Aorta (tissue), 5 donors: ENCODE measurements at regions of chrX and their contacts with region 1.

Region 1: GRCh38 chrX:154019633-154020528 is at the start of gene IRAK1:
- DNase-seq: peak; percentile 74 to 86
- ATAC-seq: peak; percentile 60
- H3K4me3 ChIP-seq: peak within 1 kb of the TSS; percentile 32 to 59
- H3K27ac ChIP-seq: peak within 1 kb of the TSS in 1 of 2 donors; percentile 41
- H3K4me1 ChIP-seq: no peaks in the 10 kb centered on the region
- H3K27me3 ChIP-seq: no peaks in the 10 kb centered on the region
- total RNA-seq, gene IRAK1: 62.3 to 78.3 TPM

Region 2: DNA sequence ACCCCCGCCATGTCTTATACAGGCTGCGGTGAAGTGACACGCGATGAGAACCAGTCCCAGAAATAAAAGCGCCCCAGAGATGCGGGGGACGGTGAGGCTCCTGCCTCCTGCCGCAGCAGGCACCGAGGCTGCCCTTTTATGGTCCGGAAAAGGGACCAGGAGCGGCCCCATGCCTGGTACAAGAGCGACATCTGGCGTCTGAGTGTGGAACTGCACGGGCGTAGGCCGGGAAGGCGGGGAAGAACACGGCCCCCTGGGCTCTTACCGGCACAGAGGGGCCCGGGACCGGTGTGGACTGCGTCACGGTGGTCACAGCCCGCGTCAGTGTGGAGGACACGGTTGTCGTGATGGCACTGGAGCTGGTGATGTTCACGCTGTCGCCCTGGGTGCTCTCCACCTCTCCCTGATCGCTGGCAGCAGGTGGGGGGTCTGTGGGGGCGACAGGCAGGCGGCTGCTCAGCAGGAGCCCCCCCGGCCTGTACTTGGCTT is 66.5 kb before region 1 on chrX:
- intact Hi-C with region 1: no loop called
- DNase-seq: peak; percentile 84 to 93
- ATAC-seq: peak; percentile 89
- H3K4me3 ChIP-seq: no peak overlapping the region
- H3K27ac ChIP-seq: peak overlapping the region in 1 of 2 donors; percentile 19
- H3K4me1 ChIP-seq: no peaks in the 10 kb centered on the region
- H3K27me3 ChIP-seq: no peaks in the 10 kb centered on the region

Region 3: GRCh38 chrX:154040307-154040756 is 20.5 kb after region 1 on chrX:
- intact Hi-C with region 1: no loop called
- DNase-seq: no peak
- ATAC-seq: no peak
- H3K4me3 ChIP-seq: no peak overlapping the region
- H3K27ac ChIP-seq: no peak overlapping the region
- H3K4me1 ChIP-seq: no peaks in the 10 kb centered on the region
- H3K27me3 ChIP-seq: no peaks in the 10 kb centered on the region

Region 4: GRCh38 chrX:154051201-154051810 is 31.4 kb after region 1 on chrX:
- intact Hi-C with region 1: loop called in 1 of 2 experiments (anchors 5 kb)
- DNase-seq: peak in 1 of 2 donors; percentile 75
- ATAC-seq: peak; percentile 68
- H3K4me3 ChIP-seq: no peak overlapping the region
- H3K27ac ChIP-seq: no peak overlapping the region
- H3K4me1 ChIP-seq: peaks cover 0 to 3% of the 10 kb centered on the region in 2 donors
- H3K27me3 ChIP-seq: no peaks in the 10 kb centered on the region

Region 5: DNA sequence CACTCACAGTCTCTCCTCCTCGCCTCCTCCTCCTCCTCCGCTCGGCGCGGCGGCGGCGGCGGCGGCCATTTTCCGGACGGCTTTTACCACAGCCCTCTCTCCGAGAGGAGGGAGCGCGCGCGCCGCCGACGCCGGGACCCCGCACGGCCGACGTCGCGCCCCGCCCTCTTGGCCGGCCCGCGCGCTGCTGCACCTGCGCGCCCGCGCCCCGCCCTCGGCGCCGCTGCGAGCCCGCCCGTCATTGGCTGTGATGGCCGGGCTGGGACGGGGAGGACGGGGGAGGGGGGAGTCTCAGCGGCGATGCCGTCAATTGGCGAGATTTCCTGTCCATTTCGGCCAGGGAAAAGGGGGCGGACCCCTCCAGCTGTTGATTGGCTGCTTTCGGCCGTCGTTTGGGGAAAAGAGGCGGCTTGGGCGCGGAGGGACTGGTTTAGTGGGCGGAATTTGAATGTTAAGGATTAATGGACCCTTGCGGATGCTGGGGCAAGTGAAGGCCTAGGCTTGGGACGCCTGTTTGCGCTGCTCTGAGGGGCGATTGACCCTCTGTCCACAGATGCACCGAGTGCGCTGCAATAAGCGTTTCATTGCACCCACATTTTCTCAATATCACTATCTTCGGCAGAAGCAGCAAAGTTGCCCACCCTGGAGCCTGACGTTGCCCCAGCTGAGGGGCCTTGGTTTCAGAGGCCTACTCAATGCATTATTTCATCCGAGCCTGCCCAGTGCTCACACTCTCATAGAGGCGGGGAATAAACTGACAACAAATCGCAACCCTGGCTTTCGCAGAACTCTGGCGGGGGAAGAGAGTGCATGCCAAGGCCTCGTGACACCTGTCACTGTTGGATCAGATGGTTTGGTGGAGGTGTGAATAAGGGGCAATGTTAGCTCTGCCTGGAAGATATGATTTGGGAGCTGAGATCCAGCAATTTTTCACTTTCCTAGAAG is 78.0 kb after region 1 on chrX and contains the start of gene MECP2:
- intact Hi-C with region 1: loop called in 1 of 2 experiments (anchors 5 kb)
- DNase-seq: peak; percentile 94
- ATAC-seq: peak; percentile 92
- H3K4me3 ChIP-seq: peak within 1 kb of the TSS; percentile 51 to 70
- H3K27ac ChIP-seq: peak within 1 kb of the TSS; percentile 45 to 99
- H3K4me1 ChIP-seq: no peaks in the 10 kb centered on the region
- H3K27me3 ChIP-seq: no peaks in the 10 kb centered on the region
- total RNA-seq, gene MECP2: 73.5 to 80.7 TPM